Sigmoid colon (tissue), 7 donors: ENCODE measurements at regions of chrX and their contacts with region 1.

Region 1: GRCh38 chrX:49878834-49879659 is at the start of gene USP27X:
- DNase-seq: peak; percentile 90
- H3K4me3 ChIP-seq: peak within 1 kb of the TSS; percentile 52 to 67 (median 63)
- H3K27ac ChIP-seq: peak within 1 kb of the TSS; percentile 86 to 87 (median 86)
- H3K4me1 ChIP-seq: peaks cover 0 to 27% (median 20%) of the 10 kb centered on the region in 4 donors
- H3K27me3 ChIP-seq: no peaks in the 10 kb centered on the region
- CTCF ChIP-seq: peak; percentile 25 to 53 (median 40)
- EP300 ChIP-seq: no peak
- POLR2A ChIP-seq: peak; percentile 5 to 35
- total RNA-seq, gene USP27X: 1.6 to 5.4 (median 2.9) TPM

Region 2: DNA sequence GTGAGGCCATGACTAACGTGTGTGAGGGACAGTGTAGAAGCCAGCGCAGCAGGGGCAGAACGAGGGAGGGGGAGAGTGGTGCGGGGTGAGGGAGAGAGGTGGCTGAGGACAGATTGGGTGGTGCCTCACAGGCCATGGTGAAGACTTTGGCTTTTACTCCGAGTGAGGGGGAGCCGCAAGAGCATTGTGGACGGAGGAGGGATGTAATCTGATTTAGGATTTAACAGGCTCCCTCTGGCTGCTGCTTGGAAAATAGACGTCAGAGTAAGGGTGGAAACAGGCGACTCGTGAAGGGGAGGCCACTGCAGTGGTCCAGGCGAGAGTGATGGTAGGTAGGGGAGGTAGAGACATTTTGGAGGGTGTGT is 596.4 kb before region 1 on chrX:
- intact Hi-C with region 1: loop called (anchors 10 kb)
- DNase-seq: peak; percentile 65
- H3K4me3 ChIP-seq: no peak overlapping the region
- H3K27ac ChIP-seq: no peak overlapping the region
- H3K4me1 ChIP-seq: no peaks in the 10 kb centered on the region
- H3K27me3 ChIP-seq: no peaks in the 10 kb centered on the region
- CTCF ChIP-seq: peak in 2 of 4 experiments; percentile 14 to 18
- EP300 ChIP-seq: no peak
- POLR2A ChIP-seq: no peak

Region 3: DNA sequence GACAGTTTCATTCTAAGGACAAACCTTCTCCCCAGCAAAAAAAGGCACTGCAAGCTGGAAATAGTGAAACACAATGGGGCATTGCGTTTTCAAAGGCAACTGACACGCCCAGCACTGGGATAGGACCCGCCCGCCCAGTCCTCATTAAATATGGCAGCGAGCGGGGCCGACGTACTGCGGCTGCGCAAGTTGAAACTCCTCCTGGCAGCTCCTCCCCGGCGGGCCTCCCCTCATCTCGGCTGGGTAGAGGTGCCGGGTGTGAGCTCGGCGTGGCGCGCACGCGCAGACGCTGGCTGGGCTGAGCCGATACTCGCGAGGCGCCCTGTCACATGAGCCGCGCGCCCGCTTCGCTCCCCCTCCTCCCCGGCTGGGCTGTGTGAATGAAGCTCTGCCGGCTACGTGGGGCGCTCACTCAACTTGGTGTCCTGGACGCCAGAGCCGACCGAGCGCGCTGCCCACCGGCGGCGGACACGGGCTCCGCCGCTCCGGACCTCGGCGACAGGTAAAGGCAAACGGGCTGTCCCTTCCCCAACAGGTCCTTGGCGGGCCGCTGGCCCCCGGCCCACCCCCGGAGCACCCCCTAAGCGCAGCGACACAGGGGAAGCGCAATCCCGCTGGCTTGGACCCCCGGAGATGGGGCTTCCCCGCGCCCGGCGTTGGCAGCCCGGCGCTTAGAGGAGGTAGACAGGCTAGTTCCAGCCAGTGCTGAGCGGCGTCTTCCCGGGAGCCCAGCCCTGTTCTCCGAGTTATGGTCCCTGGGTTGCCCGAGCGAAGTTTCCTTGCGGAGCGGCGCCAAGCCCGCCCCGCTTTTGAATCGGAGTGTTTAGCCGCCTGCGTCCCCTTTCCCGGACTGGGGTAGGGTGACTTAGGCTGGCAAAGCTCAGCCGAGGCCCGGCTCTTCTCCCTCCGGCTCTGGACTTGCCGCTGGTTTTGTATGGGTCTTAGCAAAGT is 43.5 kb after region 1 on chrX and contains the start of gene CLCN5:
- intact Hi-C with region 1: loop called (anchors 2 kb)
- DNase-seq: peak; percentile 98
- H3K4me3 ChIP-seq: peak within 1 kb of the TSS; percentile 54 to 73 (median 68)
- H3K27ac ChIP-seq: peak within 1 kb of the TSS; percentile 82 to 86 (median 84)
- H3K4me1 ChIP-seq: peaks cover 0 to 6% (median 0%) of the 10 kb centered on the region in 4 donors
- H3K27me3 ChIP-seq: no peaks in the 10 kb centered on the region
- CTCF ChIP-seq: no peak
- EP300 ChIP-seq: no peak
- POLR2A ChIP-seq: peak in 1 of 2 donors; percentile 21
- total RNA-seq, gene CLCN5: 1.8 to 3.0 (median 2.3) TPM

Region 4: DNA sequence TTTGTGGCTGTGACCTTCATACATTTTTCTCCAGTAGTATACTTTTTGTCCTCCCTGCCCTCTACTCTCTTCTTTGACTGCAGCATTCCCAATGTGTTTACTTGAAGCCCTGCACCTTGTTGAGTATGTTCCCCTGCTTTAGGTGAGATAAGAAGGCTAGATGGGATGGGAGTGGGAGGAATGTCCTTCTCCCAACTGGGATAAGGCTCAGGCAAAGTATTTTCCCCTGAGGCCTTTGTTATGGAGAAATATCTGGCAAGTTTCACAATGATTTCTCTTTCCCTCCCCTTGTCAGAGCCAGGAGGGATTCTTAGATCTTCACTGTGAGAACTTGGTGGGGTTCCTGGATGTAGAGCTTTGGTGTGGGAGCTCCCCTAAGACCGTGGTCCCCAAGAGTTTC is 175.1 kb after region 1 on chrX:
- intact Hi-C with region 1: no loop called
- DNase-seq: no peak
- H3K4me3 ChIP-seq: no peak overlapping the region
- H3K27ac ChIP-seq: no peak overlapping the region
- H3K4me1 ChIP-seq: no peaks in the 10 kb centered on the region
- H3K27me3 ChIP-seq: no peaks in the 10 kb centered on the region
- CTCF ChIP-seq: no peak
- EP300 ChIP-seq: no peak
- POLR2A ChIP-seq: no peak

Region 5: GRCh38 chrX:50756276-50756675 is 877.2 kb after region 1 on chrX:
- intact Hi-C with region 1: no loop called
- DNase-seq: no peak
- H3K4me3 ChIP-seq: no peak overlapping the region
- H3K27ac ChIP-seq: no peak overlapping the region
- H3K4me1 ChIP-seq: no peaks in the 10 kb centered on the region
- H3K27me3 ChIP-seq: no peaks in the 10 kb centered on the region
- CTCF ChIP-seq: no peak
- EP300 ChIP-seq: no peak
- POLR2A ChIP-seq: no peak